Activated CD4-positive, alpha-beta T cell treated with anti-CD3 and anti-CD28 coated beads, Interleukin-2, amount 10 ng/mL, durations not matched to agents 24 days and 14 days (primary cell): ENCODE measurements at regions of chr1 and their contacts with region 1.

Region 1: GRCh38 chr1:162497723-162498500 is at the start of gene UHMK1:
- DNase-seq: peak; percentile 96
- H3K4me3 Mint-ChIP-seq: peak within 1 kb of the TSS; percentile 86
- H3K27ac Mint-ChIP-seq: peak within 1 kb of the TSS; percentile 88
- H3K4me1 Mint-ChIP-seq: peaks cover 28% of the 10 kb centered on the region
- H3K27me3 Mint-ChIP-seq: peaks cover 3% of the 10 kb centered on the region
- total RNA-seq, gene UHMK1: 59.8 and 60.1 TPM in 2 replicates

Region 2: GRCh38 chr1:162561037-162561616 is 63.2 kb after region 1 on chr1:
- intact Hi-C with region 1: loop called (anchors 1 kb)
- DNase-seq: peak; percentile 99
- H3K4me3 Mint-ChIP-seq: peak overlapping the region; percentile 85
- H3K27ac Mint-ChIP-seq: peak overlapping the region; percentile 93
- H3K4me1 Mint-ChIP-seq: peaks cover 31% of the 10 kb centered on the region
- H3K27me3 Mint-ChIP-seq: no peaks in the 10 kb centered on the region